Thyroid gland (tissue), 4 donors: ENCODE measurements at regions of chr15 and their contacts with region 1.

Region 1: GRCh38 chr15:69939513-69940440 is 157.9 kb downstream of the TLE3 start:
- DNase-seq: no peak
- H3K4me3 ChIP-seq: no peak overlapping the region
- H3K27ac ChIP-seq: no peak overlapping the region
- H3K4me1 ChIP-seq: no peaks in the 10 kb centered on the region
- H3K27me3 ChIP-seq: no peaks in the 10 kb centered on the region
- CTCF ChIP-seq: no peak
- POLR2A ChIP-seq: no peak

Region 2: DNA sequence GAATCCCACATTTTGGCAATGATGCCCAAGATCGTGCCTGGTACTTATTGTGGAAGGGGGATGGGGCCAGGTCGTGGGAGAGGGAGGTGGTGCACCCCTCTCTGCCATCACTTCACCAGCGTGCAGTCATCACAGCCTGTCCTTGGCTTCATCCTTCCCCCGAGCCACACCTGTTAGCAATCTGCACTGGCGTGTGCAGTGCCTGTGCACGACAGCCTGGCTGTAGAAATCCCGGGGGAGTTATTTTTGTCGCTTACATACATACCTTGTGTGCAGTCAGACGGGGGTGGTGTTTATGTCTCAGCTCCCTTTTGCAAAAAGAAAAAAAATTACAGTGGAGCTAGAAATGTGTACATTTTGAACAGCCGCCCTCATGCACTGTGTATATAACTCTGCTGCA is 58.0 kb before region 1 on chr15:
- intact Hi-C with region 1: no loop called
- DNase-seq: peak; percentile 11 to 27
- H3K4me3 ChIP-seq: no peak overlapping the region
- H3K27ac ChIP-seq: no peak overlapping the region
- H3K4me1 ChIP-seq: peaks cover 0 to 9% of the 10 kb centered on the region in 2 donors
- H3K27me3 ChIP-seq: no peaks in the 10 kb centered on the region
- CTCF ChIP-seq: no peak
- POLR2A ChIP-seq: no peak

Region 3: GRCh38 chr15:69987492-69988482 is 48.0 kb after region 1 on chr15:
- intact Hi-C with region 1: loop called (anchors 5 kb)
- DNase-seq: no peak
- H3K4me3 ChIP-seq: no peak overlapping the region
- H3K27ac ChIP-seq: no peak overlapping the region
- H3K4me1 ChIP-seq: no peaks in the 10 kb centered on the region
- H3K27me3 ChIP-seq: no peaks in the 10 kb centered on the region
- CTCF ChIP-seq: no peak
- POLR2A ChIP-seq: no peak